Dorsolateral prefrontal cortex (tissue), 120 donors: ENCODE measurements at regions of chr14 and their contacts with region 1.

Region 1: GRCh38 chr14:35046048-35046741 is at the start of gene FAM177A1:
- DNase-seq: peak; percentile 97 to 99 (median 98)
- H3K4me3 ChIP-seq: peak within 1 kb of the TSS; percentile 60 to 97 (median 91)
- H3K27ac ChIP-seq: peak within 1 kb of the TSS; percentile 92 to 100 (median 98)
- H3K27me3 ChIP-seq: no peaks in the 10 kb centered on the region
- CTCF ChIP-seq: peak in 24 of 56 donors; percentile 11 to 45 (median 30)
- total RNA-seq, gene FAM177A1: 34.2 to 106 (median 58.8) TPM

Region 2: GRCh38 chr14:34678306-34678705 is 367.9 kb before region 1 on chr14:
- intact Hi-C with region 1: loop called in 1 of 2 experiments (anchors 10 kb)
- DNase-seq: peak in 1 of 10 donors; percentile 54
- H3K4me3 ChIP-seq: peak overlapping the region in 41 of 59 donors; percentile 4 to 54 (median 30)
- H3K27ac ChIP-seq: peak overlapping the region; percentile 41 to 99 (median 93)
- H3K27me3 ChIP-seq: peaks cover 0 to 2% (median 0%) of the 10 kb centered on the region in 45 donors
- CTCF ChIP-seq: peak in 1 of 56 donors; percentile 17

Region 3: DNA sequence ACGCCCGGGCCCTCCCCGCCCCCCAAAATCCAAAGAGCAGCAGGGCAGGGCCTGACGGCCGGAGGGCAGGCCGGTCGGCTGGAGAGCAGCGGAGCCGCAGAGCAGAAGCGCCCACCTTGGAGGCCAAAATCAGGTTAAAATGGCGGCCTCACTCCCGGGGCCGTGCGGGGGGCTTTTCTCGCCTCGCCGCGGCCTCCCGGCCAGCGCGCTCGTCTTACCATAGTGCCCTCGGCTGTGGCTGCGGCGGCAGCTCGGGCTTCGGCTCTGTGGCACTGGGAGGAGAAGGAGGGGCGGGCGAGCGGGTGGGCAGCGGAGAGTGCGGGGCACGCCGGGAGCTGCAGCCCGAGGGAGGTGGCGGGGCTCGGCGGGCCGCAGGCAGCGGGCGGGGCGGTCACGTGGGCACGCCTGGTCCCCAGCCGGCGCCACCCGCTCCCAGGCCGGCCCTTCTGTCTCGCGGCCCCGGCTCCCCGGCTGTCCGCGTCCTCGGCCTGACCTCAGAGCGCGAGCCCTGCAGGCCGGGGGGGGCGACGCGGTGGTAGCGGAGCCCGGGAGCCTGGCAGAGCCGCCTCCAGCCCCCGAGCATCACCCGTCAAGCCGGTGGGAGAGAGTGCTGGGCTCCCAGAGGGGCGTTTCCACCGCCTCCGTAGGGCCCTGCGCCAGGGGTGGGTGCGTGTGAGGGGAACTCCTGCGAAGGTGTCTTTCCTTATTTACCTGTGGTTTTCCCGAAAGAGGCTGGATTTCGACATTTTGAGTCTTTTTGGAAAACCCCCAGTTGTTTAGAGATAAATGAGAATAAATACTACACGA is 331.7 kb before region 1 on chr14 and contains the start of gene CFL2:
- intact Hi-C with region 1: loop called in 1 of 2 experiments (anchors 10 kb)
- DNase-seq: peak; percentile 86 to 96 (median 92)
- H3K4me3 ChIP-seq: peak within 1 kb of the TSS; percentile 63 to 98 (median 86)
- H3K27ac ChIP-seq: peak within 1 kb of the TSS; percentile 80 to 99 (median 98)
- H3K27me3 ChIP-seq: no peaks in the 10 kb centered on the region
- CTCF ChIP-seq: peak in 13 of 56 donors; percentile 3 to 40 (median 20)
- total RNA-seq, gene CFL2: 50.4 to 286 (median 109) TPM

Region 4: DNA sequence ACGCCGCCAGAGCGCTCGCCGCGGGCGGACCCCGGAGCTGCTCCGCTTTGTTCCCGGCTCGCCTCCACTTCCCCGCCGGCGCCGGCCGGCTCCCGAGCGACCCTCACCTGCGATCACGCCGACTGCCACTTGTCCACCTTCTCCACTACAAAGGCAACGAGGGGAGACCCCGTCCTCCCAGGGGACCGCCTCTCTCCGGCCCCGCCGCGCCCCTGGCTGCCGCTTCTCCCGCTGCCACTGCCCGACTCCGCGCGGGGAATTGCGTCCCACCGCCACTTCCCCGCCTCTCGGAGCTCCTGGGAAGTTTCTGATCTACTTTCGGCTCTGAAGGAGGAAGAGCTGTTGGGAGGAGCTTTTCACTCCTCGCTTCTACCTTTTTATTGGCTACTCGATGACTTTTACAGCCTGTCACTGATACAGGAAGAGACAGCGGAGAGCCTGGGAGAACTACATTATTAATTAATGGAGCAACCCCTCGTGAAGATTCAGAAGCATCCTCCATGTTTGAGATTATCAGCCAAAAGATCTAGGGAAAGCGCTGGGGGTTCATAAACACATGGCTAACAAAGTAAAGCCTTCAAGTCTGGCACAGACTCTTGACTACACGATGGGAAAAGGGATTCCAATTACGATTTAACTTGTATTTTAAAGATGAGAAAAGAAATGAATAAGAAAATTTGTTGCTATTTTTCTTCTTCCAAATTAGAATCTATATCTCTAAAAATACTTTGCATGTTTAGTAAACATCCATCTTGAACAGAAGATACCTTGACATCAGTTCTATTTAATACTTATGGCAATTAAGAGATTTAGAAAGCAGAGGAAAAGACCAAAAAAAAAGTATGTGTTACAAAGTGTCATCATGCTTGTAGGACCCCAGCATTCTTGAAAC is 170.9 kb before region 1 on chr14 and contains the start of gene BAZ1A:
- intact Hi-C with region 1: loop called (anchors 2 to 10 kb)
- DNase-seq: peak in 4 of 10 donors; percentile 4 to 59 (median 22)
- H3K4me3 ChIP-seq: peak within 1 kb of the TSS; percentile 61 to 93 (median 84)
- H3K27ac ChIP-seq: peak within 1 kb of the TSS; percentile 73 to 99 (median 94)
- H3K27me3 ChIP-seq: no peaks in the 10 kb centered on the region
- CTCF ChIP-seq: peak in 23 of 56 donors; percentile 7 to 45 (median 19)
- total RNA-seq, gene BAZ1A: 3.8 to 20.1 (median 9.0) TPM

Region 5: DNA sequence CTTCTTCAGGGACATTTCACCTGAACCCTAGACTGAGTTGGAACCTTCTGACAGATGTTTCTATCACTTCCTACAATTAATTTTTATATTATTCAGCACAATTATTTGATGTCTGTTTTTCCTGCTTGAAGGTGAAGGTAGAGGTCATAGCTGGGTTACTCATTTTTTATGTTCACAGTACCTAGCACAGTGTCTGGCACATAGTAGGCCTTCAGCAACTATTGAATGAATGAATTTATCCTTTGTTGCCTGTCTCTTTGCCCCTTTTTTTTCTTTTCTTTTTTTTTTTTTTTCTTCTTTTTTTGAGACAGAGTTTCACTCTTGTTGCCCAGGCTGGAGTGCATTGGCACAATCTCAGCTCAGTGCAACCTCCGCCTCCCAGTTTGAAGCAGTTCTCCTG is 29.6 kb before region 1 on chr14:
- intact Hi-C with region 1: no loop called
- DNase-seq: no peak
- H3K4me3 ChIP-seq: no peak overlapping the region
- H3K27ac ChIP-seq: no peak overlapping the region
- H3K27me3 ChIP-seq: no peaks in the 10 kb centered on the region
- CTCF ChIP-seq: no peak

Region 6: DNA sequence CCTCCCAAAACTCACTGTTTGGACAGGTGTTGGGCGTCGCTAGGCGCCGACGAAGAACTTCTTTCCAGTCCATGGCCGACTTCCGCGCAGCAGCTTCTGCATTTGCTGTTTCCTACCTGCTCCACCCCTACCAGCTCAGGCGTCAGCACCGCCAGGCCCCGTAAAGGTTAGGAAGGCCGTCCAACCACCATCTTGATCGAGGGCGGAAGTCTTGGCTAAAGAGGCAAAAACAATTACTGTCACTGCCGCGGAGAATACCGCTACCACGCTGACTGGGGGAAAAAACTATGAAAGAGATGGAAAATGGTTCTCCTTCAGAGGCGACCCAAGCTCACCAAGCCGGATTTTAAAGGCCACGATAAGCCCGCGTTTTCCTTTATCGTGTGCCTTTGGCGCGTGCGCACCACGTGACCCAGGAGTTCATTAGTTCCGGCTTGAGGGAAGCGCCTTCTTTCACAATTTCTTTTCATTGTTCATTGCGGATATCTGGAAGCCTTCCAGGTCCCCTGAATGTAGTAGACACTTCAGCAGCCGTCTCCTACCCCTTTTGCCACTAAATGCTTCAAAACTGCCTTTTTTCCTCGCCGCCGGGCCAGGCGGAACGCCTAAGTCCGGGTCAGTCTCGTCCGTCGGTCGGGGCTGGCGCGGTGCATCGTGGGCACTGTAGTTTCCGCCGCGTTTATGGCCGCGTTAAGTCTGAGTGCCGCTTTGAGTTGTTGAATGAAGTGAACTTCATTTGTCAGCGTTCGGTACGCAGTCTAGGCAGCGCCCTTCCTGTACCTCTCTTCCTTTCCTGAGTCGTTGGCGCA is 75.9 kb after region 1 on chr14 and contains the starts of genes PPP2R3C and PRORP:
- intact Hi-C with region 1: loop called (anchors 1 to 5 kb)
- DNase-seq: peak; percentile 86 to 93 (median 90)
- H3K4me3 ChIP-seq: peak within 1 kb of the TSS; percentile 66 to 99 (median 87)
- H3K27ac ChIP-seq: peak within 1 kb of the TSS; percentile 92 to 99 (median 98)
- H3K27me3 ChIP-seq: no peaks in the 10 kb centered on the region
- CTCF ChIP-seq: peak in 10 of 56 donors; percentile 2 to 31 (median 16)
- total RNA-seq, gene PPP2R3C: 24.5 to 46.9 (median 33.9) TPM
- total RNA-seq, gene PRORP: 13.9 to 33.4 (median 22.8) TPM